HepG2 (cell line): ENCODE measurements at regions of chr6 and their contacts with region 1.

Region 1: GRCh38 chr6:158168040-158168289 is at the start of gene SERAC1:
- DNase-seq: no peak
- ATAC-seq: peak; percentile 89; the same call in 2 of the 3 replicates
- H3K4me3 ChIP-seq: peak within 1 kb of the TSS; percentile 74 to 90 (median 87)
- H3K27ac ChIP-seq: peak within 1 kb of the TSS; percentile 91
- H3K4me1 ChIP-seq: peaks cover 39% of the 10 kb centered on the region
- H3K27me3 ChIP-seq: no peaks in the 10 kb centered on the region; a peak in 1 of 5 replicates
- CTCF ChIP-seq: no peak
- EP300 ChIP-seq: no peak
- POLR2A ChIP-seq: no peak
- RAD21 ChIP-seq: no peak
- total RNA-seq, gene SERAC1: 8.1 and 9.6 TPM in 2 replicates

Region 2: DNA sequence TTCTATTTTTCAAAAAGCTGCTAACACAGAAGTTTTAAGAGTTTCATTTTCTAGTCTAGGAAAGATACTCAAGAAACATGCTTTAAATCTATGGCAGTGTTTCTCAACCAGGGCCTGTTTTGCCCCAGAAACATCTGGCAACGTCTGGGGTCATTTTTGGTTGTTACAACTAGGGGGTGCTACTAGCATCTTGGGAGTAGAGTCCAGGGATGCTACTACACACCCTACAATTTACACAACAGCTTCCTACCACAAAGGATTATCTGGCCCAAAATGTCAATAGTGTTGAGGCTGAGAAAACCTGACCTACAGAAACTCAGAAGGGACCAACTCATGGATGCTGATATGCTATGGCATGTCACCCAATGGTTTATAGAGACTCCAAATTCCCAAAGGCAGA is 24.3 kb before region 1 on chr6:
- CTCF ChIA-PET with region 1: no interaction called
- POLR2A ChIA-PET with region 1: no interaction called
- in situ Hi-C with region 1: no loop called
- intact Hi-C with region 1: loop called (anchors 2 kb)
- DNase-seq: peak; percentile 48
- ATAC-seq: peak; percentile 82
- H3K4me3 ChIP-seq: no peak overlapping the region
- H3K27ac ChIP-seq: no peak overlapping the region
- H3K4me1 ChIP-seq: no peaks in the 10 kb centered on the region
- H3K27me3 ChIP-seq: no peaks in the 10 kb centered on the region
- CTCF ChIP-seq: peak; percentile 79
- EP300 ChIP-seq: no peak
- POLR2A ChIP-seq: no peak
- RAD21 ChIP-seq: peak; percentile 64

Region 3: GRCh38 chr6:158185729-158186456 is 17.9 kb after region 1 on chr6:
- CTCF ChIA-PET with region 1: no interaction called
- POLR2A ChIA-PET with region 1: interaction called, 16 read pairs
- in situ Hi-C with region 1: no loop called
- intact Hi-C with region 1: loop called (anchors 2 kb)
- DNase-seq: no peak
- ATAC-seq: no peak
- H3K4me3 ChIP-seq: no peak overlapping the region
- H3K27ac ChIP-seq: no peak overlapping the region
- H3K4me1 ChIP-seq: peaks cover 90% of the 10 kb centered on the region
- H3K27me3 ChIP-seq: no peaks in the 10 kb centered on the region
- CTCF ChIP-seq: no peak
- EP300 ChIP-seq: no peak
- POLR2A ChIP-seq: no peak
- RAD21 ChIP-seq: no peak

Region 4: GRCh38 chr6:158207422-158207788 is 39.4 kb after region 1 on chr6:
- CTCF ChIA-PET with region 1: no interaction called
- POLR2A ChIA-PET with region 1: no interaction called
- in situ Hi-C with region 1: no loop called
- intact Hi-C with region 1: loop called (anchors 1 kb)
- DNase-seq: peak; percentile 80
- ATAC-seq: peak; percentile 21; the same call in 2 of the 3 replicates
- H3K4me3 ChIP-seq: no peak overlapping the region
- H3K27ac ChIP-seq: no peak overlapping the region
- H3K4me1 ChIP-seq: peaks cover 42% of the 10 kb centered on the region
- H3K27me3 ChIP-seq: 0 out of 5 replicates have a peak, but pooled peaks cover 0 to 6% of the 10 kb centered on the region in 2 experiments
- CTCF ChIP-seq: no peak
- EP300 ChIP-seq: no peak
- POLR2A ChIP-seq: no peak
- RAD21 ChIP-seq: no peak

Region 5: GRCh38 chr6:158303210-158303731 is 135.3 kb after region 1 on chr6:
- CTCF ChIA-PET with region 1: no interaction called
- POLR2A ChIA-PET with region 1: no interaction called
- in situ Hi-C with region 1: no loop called
- intact Hi-C with region 1: no loop called
- DNase-seq: peak; percentile 84
- ATAC-seq: peak; percentile 88
- H3K4me3 ChIP-seq: peak overlapping the region; percentile 17 to 38 (median 21); a peak in 3 of 6 replicates
- H3K27ac ChIP-seq: peak overlapping the region; percentile 77
- H3K4me1 ChIP-seq: peaks cover 79% of the 10 kb centered on the region
- H3K27me3 ChIP-seq: no peaks in the 10 kb centered on the region
- CTCF ChIP-seq: no peak
- EP300 ChIP-seq: peak in 1 of 2 experiments; percentile 76; a peak in 1 of 4 replicates
- POLR2A ChIP-seq: peak; percentile 39 to 40; a peak in 2 of 4 replicates
- RAD21 ChIP-seq: 0 out of 2 replicates have a peak, but pooled peaks have one; percentile 13